Ovary (tissue), 10 donors: ENCODE measurements at regions of chr14 and their contacts with region 1.

Region 1: DNA sequence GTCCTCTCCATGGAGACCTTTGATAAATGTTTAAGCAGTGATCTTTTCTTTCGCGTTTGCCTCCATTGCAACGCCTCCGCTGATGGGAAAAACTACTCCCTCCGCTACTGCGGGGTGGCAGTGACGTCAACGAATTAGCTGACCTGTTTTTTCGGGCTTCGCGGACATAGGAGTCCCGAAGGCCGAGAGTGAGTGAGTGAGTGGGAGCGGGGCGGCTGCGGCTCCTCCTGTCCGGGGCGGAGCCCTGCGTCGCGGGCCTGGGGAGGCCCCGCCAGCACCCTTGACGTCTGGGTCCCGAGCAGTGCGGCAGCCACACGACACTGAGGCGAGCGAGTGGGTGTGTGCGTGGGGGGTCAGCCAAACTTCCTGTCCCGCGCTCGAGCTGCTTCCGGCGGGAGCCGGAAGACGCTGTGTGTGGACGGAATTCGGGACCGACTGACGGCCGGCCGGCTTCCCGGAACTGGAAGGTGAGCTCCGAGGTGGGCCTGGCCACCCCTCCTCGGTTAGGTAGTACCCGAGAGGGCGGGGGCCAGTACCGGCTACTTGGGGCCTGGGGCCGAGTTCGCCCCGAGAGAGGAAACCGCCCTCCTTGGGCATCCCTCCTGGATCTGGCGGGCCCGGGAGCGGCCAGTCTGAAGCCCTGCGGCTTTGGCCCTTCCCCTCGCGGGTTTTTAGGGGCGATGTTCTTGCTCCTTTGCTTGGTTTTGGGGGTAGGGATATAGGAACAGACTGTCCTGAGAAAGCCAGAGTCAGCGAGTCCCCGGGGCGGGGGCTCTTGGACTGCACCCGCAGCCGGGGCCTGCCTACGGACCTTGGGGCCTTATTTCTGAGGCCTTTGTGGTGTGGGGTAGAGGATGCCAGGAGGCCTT is at the start of gene ZNF410:
- DNase-seq: peak; percentile 92 to 95 (median 93)
- H3K4me3 ChIP-seq: peak within 1 kb of the TSS; percentile 77
- H3K27ac ChIP-seq: peak within 1 kb of the TSS; percentile 90 to 92
- H3K4me1 ChIP-seq: peaks cover 3% of the 10 kb centered on the region
- H3K27me3 ChIP-seq: no peaks in the 10 kb centered on the region
- CTCF ChIP-seq: no peak
- EP300 ChIP-seq: peak; percentile 61
- POLR2A ChIP-seq: peak; percentile 82
- total RNA-seq, gene ZNF410: 47.7 to 71.4 (median 54.4) TPM

Region 2: DNA sequence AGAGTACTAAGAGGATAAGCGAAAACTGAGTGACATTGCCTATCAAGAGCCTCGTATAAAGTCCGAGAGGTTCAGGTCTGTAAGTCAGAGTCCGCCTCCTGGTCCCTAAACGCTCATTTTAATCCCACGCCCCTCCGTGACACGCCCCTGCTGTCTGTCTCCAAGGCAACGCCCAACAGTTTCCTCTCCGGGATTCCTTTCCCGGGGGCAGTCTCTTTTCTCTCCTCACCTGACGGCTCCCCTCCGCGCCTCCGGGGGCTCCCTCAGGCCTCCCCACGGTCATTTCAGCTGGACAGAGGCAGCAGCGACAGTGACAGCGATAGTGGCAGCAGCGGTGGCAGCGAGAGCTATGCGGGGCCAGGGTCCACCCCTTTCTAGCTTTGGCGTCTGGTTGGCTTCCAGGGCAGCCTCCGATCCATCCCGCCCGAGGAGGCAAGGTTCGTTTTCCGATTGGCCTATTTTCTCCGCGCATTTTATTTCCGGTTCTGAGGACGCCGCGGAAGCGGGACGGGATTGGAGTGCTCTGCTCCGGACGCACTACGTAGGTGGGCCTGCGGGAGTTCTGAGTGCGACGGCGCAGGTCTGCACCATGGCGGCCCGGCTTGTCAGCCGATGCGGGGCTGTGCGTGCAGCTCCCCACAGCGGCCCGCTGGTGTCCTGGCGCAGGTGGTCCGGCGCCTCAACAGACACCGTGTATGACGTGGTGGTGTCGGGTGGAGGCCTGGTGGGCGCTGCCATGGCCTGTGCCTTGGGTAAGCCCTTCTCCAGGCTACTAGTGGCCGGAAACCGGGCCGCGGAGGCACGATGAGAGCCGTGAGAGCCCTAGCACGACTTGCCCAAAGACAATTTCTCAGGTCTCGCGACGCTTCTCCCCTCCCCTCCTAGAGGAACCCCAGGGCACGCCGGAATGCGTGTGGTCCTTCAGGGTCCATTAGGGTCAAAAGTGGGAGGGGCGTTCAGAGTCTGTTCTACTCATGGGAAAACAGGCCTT is 63.4 kb after region 1 on chr14 and contains the starts of genes COQ6 and FAM161B:
- intact Hi-C with region 1: loop called in 1 of 4 experiments (anchors 2 kb)
- DNase-seq: peak; percentile 90 to 95 (median 92)
- H3K4me3 ChIP-seq: peak within 1 kb of the TSS; percentile 71
- H3K27ac ChIP-seq: peak within 1 kb of the TSS; percentile 70 to 96
- H3K4me1 ChIP-seq: peaks cover 4% of the 10 kb centered on the region
- H3K27me3 ChIP-seq: no peaks in the 10 kb centered on the region
- CTCF ChIP-seq: peak; percentile 28 to 60 (median 57)
- EP300 ChIP-seq: no peak
- POLR2A ChIP-seq: peak; percentile 84
- total RNA-seq, gene COQ6: 17.1 to 27.1 (median 18.7) TPM
- total RNA-seq, gene FAM161B: 8.3 to 21.4 (median 14.9) TPM

Region 3: DNA sequence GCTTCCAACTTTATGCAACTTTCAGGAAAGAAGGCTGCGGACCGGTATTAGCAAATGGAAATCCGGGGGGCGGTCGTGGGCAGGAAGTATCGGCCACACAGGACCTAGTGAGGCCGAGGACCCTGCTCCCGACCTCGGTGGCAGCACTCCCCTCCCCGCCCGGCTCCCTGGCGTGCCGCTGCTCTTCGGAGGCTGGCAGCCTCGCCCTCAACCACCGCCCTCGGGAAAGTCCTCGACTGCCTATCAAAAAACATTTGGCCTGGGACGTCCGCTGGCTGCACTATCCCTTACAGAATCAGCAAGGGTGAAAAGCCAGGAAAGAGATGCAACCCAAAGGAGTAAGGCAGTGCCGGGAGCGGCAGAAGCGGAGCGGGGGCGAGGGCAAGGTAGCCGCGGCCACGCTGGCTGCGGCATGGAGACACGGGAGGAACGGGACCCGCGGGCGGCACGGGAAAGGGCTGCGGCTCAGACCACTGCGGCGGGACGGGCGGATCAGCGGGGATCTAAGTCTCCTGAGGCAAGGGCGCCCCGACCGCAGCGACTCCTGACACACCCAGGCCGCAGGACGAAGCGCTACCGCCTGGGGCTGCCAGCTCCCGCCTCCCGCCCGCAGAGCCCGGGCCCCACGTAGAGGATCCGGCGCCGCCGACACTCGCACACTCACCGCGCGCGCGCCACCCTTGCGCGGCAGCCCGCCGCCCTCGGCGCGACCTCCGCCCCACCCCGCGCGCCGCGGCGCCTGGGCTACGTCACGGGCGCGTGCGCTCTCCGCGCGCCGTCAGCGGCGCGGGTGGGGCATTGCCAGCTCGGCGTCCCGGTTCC is 132.1 kb after region 1 on chr14 and contains the starts of genes BBOF1 and ENTPD5:
- intact Hi-C with region 1: loop called in 1 of 4 experiments (anchors 10 kb)
- DNase-seq: peak; percentile 84 to 91 (median 89)
- H3K4me3 ChIP-seq: peak within 1 kb of the TSS; percentile 70
- H3K27ac ChIP-seq: peak within 1 kb of the TSS; percentile 81 to 95
- H3K4me1 ChIP-seq: no peaks in the 10 kb centered on the region
- H3K27me3 ChIP-seq: no peaks in the 10 kb centered on the region
- CTCF ChIP-seq: peak in 2 of 3 donors; percentile 13 to 20
- EP300 ChIP-seq: no peak
- POLR2A ChIP-seq: peak; percentile 86
- total RNA-seq, gene BBOF1: 1.7 to 16.5 (median 4.9) TPM
- total RNA-seq, gene ENTPD5: 4.8 to 11.6 (median 7.0) TPM